ENCODE measurements at regions of chr15 and their contacts with region 1.

Region 1: GRCh38 chr15:89101302-89102191 is 13.3 kb downstream of the ABHD2 start:
- DNase-seq: peak; percentile 98
- H3K4me3 ChIP-seq: no peak overlapping the region
- H3K27ac ChIP-seq: peak overlapping the region; percentile 98
- H3K4me1 ChIP-seq: peaks cover 46% of the 10 kb centered on the region
- H3K27me3 ChIP-seq: no peaks in the 10 kb centered on the region
- CTCF ChIP-seq: no peak

Region 2: DNA sequence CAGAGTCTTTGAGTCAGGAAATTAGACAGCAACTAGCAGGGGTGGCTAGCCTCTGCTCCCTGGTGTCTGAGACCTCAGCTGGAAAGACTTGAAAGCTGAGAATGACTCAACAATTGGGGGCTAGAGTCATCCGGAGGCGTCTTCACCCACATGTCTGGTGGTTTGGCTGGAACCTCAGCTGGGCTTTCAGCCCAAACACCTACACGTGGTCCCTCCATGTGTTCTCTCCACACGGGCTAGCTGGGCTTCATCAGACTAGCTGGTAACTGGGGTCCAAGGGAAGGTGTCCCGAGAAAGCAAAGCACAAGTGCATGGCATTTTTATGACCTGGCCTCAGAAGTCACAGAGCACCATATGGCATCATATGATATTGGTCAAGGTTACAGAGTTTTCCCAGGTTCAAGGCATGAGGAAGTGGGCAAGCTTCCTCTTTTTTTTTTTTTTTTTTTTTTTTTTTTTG is 33.2 kb before region 1 on chr15:
- CTCF ChIA-PET with region 1: no interaction called
- dilution Hi-C with region 1: loop called (anchors 5 kb)
- in situ Hi-C with region 1: no loop called
- intact Hi-C with region 1: no loop called
- DNase-seq: peak; percentile 88
- H3K4me3 ChIP-seq: no peak overlapping the region
- H3K27ac ChIP-seq: no peak overlapping the region
- H3K4me1 ChIP-seq: peaks cover 17% of the 10 kb centered on the region
- H3K27me3 ChIP-seq: no peaks in the 10 kb centered on the region
- CTCF ChIP-seq: no peak

Region 3: GRCh38 chr15:89087830-89088604 is 13.5 kb before region 1 on chr15 and contains the start of gene ABHD2:
- CTCF ChIA-PET with region 1: interaction called, 5 read pairs
- dilution Hi-C with region 1: no loop called
- in situ Hi-C with region 1: no loop called
- intact Hi-C with region 1: loop called (anchors 1 kb)
- DNase-seq: peak; percentile 100
- H3K4me3 ChIP-seq: peak within 1 kb of the TSS; percentile 77 to 89 (median 87)
- H3K27ac ChIP-seq: peak within 1 kb of the TSS; percentile 66
- H3K4me1 ChIP-seq: peaks cover 25% of the 10 kb centered on the region
- H3K27me3 ChIP-seq: no peaks in the 10 kb centered on the region
- CTCF ChIP-seq: no peak
- total RNA-seq, gene ABHD2: 35.3 to 47.4 TPM

Measured in mammary epithelial cell (primary cell).